Spleen (tissue), 13 donors: ENCODE measurements at regions of chr22 and their contacts with region 1.

Region 1: GRCh38 chr22:19909350-19910179 is 32.0 kb upstream of the COMT start:
- DNase-seq: peak; percentile 93
- H3K4me3 ChIP-seq: no peak overlapping the region
- H3K27ac ChIP-seq: no peak overlapping the region
- H3K4me1 ChIP-seq: peaks cover 0 to 5% (median 0%) of the 10 kb centered on the region in 6 donors
- H3K27me3 ChIP-seq: no peaks in the 10 kb centered on the region
- CTCF ChIP-seq: peak; percentile 86 to 97 (median 93)
- POLR2A ChIP-seq: no peak

Region 2: DNA sequence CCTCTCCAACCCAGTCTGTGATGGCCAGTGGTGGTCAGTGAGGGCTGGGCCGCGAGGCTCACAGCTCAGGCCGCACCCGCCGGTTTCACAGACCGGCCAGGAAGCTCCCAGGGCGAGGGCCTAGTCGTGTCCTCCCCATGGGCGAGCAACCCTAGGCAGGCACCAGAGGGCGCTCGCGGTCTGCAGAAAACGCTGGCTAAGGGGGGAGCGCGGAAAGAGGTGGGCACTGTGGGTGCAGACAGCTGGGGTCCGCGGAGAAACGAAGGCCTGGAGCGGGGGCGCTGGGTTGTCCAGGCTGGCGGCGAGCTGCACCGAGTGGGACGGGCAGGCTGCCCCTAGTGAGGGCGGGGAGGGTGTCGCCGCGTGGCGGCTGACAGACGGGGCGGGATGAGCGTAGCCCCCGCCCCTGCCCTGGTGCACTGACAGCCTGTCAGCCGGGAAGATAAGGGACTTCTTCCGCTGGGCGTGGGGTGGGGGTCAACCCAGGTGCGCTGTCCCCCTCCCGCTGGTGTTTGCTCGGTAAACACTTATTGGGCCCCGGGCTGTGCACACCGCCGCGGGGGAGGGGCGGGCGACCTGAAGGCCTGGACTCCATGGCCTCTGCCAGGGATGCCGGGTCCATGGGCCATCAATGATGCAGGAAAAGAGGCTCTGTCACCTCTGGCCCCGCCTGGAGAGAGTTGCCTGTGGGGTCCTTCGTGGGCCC is 178.8 kb before region 1 on chr22:
- intact Hi-C with region 1: loop called (anchors 2 kb)
- DNase-seq: peak; percentile 95
- H3K4me3 ChIP-seq: peak overlapping the region in 7 of 8 donors; percentile 15 to 60 (median 35)
- H3K27ac ChIP-seq: no peak overlapping the region
- H3K4me1 ChIP-seq: peaks cover 0 to 13% (median 10%) of the 10 kb centered on the region in 6 donors
- H3K27me3 ChIP-seq: peaks cover 0 to 30% (median 6%) of the 10 kb centered on the region in 7 donors
- CTCF ChIP-seq: peak; percentile 90 to 99 (median 97)
- POLR2A ChIP-seq: no peak